IMR-90 (cell line): ENCODE measurements at regions of chr16 and their contacts with region 1.

Region 1: GRCh38 chr16:30957456-30958174 is at the start of gene SETD1A:
- DNase-seq: peak; percentile 95
- ATAC-seq: peak; percentile 85
- H3K4me3 ChIP-seq: peak within 1 kb of the TSS; percentile 61
- H3K27ac ChIP-seq: peak within 1 kb of the TSS; percentile 95
- H3K4me1 ChIP-seq: peaks cover 6% of the 10 kb centered on the region
- H3K27me3 ChIP-seq: no peaks in the 10 kb centered on the region
- CTCF ChIP-seq: no peak
- POLR2A ChIP-seq: no peak; the same call in 1 of the 2 replicates
- RAD21 ChIP-seq: no peak
- total RNA-seq, gene SETD1A: 0.54 and 0.56 TPM in 2 replicates

Region 2: DNA sequence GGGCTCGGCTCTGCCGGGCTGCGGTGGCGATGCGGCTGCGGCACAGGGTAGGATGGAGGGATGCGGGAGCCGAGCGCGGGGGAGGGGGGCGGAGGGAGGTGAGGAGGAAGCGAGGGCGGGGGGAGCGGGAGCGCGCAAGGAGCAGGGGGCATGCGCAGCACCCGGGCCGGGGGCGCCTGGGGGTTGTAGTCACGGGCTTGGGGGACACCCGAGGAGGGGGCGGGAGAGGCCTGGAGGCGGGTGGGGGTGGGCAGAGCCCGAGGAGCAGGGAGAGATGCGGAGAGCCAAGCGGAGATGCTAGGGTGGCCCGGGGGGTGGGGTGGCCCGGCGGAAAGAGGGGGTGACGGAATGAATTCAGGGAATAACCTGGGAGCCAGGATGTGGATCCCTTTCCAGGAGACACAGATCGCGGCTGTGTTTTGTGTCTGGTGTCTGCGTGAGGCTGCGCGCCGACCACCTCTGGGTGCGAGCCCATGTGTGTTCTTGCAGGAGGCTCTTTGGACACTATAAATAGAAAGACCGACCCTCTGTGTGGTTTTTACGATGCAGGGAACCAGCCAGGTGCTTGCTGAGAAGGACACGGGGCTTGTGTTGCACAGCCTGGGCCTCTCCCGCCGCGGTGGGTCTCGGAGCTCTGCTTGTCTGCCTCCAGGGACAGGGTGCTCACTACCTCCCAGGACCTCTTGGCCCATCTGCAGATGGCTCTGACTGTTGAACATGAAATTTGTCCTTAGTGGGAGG is 53.1 kb after region 1 on chr16 and contains the start of gene STX1B:
- CTCF ChIA-PET with region 1: no interaction called
- POLR2A ChIA-PET with region 1: no interaction called
- dilution Hi-C with region 1: no loop called
- in situ Hi-C with region 1: no loop called
- intact Hi-C with region 1: no loop called
- DNase-seq: no peak
- ATAC-seq: peak; percentile 75
- H3K4me3 ChIP-seq: peak within 1 kb of the TSS; percentile 62
- H3K27ac ChIP-seq: peak within 1 kb of the TSS; percentile 11; the same call in 1 of the 2 replicates
- H3K4me1 ChIP-seq: peaks cover 31% of the 10 kb centered on the region
- H3K27me3 ChIP-seq: peaks cover 9% of the 10 kb centered on the region
- CTCF ChIP-seq: no peak
- POLR2A ChIP-seq: no peak
- RAD21 ChIP-seq: no peak
- total RNA-seq, gene STX1B: 3.9 TPM in 2 replicates

Region 3: DNA sequence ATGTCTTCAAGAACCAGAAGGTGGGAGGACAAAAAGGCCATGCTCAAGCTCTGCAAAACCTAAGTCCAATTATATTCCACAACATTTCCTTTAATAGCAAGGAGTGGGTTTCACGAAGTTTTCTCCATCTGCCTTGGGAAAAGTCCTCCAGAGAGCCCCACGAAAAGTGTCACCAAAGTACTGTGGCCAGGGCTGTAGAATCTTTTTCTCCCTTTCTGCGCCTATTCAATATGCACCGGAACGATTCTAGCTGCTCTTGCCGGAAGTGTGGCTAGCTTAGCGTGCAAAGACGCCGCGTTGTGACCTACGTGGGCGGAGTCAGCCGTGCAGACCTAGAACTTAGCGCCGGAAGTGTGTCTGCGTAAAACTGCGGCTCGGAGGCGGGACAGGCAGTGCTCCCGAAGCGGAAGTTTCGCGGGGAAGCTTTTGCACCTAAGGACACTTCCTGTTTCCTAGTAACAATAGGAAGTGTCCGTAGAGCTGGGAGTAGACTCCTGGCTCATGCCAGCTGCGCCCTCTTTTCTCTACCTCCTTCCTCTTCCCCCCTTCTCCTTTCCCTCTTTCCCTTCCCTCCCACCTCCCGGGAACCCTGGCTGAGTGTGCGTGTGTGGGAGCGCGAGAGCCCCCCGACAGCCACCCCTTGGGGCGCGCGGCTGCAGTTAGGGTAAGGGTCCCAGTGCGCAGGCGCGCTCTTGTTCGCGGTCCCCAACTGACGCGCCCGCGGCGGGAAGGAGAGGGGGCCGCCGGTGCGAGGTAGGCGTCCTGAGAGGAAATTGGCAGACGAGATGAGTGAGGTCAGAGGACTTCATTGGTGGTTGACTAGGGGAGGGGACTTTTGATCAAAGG is 116.6 kb after region 1 on chr16 and contains the starts of genes ZNF646 and ZNF668:
- CTCF ChIA-PET with region 1: no interaction called
- POLR2A ChIA-PET with region 1: no interaction called
- dilution Hi-C with region 1: no loop called
- in situ Hi-C with region 1: no loop called
- intact Hi-C with region 1: loop called (anchors 10 kb)
- DNase-seq: peak; percentile 100
- ATAC-seq: peak; percentile 76
- H3K4me3 ChIP-seq: peak within 1 kb of the TSS; percentile 81
- H3K27ac ChIP-seq: peak within 1 kb of the TSS; percentile 90
- H3K4me1 ChIP-seq: peaks cover 6% of the 10 kb centered on the region
- H3K27me3 ChIP-seq: no peaks in the 10 kb centered on the region
- CTCF ChIP-seq: no peak
- POLR2A ChIP-seq: peak; percentile 72
- RAD21 ChIP-seq: no peak; the same call in 1 of the 2 replicates
- total RNA-seq, gene ZNF646: 6.8 and 6.9 TPM in 2 replicates
- total RNA-seq, gene ZNF668: 4.5 and 5.3 TPM in 2 replicates

Region 4: GRCh38 chr16:31168848-31169247 is 211.2 kb after region 1 on chr16:
- CTCF ChIA-PET with region 1: no interaction called
- POLR2A ChIA-PET with region 1: no interaction called
- dilution Hi-C with region 1: no loop called
- in situ Hi-C with region 1: no loop called
- intact Hi-C with region 1: no loop called
- DNase-seq: no peak
- ATAC-seq: no peak
- H3K4me3 ChIP-seq: no peak overlapping the region
- H3K27ac ChIP-seq: no peak overlapping the region
- H3K4me1 ChIP-seq: no peaks in the 10 kb centered on the region
- H3K27me3 ChIP-seq: no peaks in the 10 kb centered on the region
- CTCF ChIP-seq: no peak
- POLR2A ChIP-seq: no peak
- RAD21 ChIP-seq: no peak

Region 5: DNA sequence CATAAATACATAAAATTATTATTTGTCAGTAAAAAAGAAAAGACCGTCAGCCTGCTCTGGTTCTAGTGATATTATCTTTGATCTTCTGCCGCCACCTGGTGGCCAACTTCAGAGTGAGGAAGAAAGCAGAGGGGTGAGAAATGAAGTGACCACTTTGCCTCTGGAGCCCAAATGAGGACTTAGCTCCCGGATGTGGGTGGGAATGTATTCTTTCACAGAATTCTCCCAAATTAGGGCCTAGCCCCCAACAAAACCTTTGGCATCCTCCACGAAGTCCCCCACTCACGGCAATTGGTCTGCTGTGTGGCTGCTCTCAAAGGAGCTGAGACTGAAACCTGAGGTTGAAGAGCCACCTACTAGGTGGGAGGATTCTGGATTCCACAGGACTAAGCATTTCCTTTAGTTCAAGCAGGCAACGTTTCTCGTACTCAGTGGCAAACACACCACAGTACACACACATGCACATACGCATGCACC is 911.1 kb after region 1 on chr16:
- CTCF ChIA-PET with region 1: no interaction called
- POLR2A ChIA-PET with region 1: no interaction called
- dilution Hi-C with region 1: no loop called
- in situ Hi-C with region 1: no loop called
- intact Hi-C with region 1: loop called (anchors 10 kb)
- DNase-seq: peak; percentile 72
- ATAC-seq: peak; percentile 79
- H3K4me3 ChIP-seq: no peak overlapping the region
- H3K27ac ChIP-seq: no peak overlapping the region
- H3K4me1 ChIP-seq: peaks cover 6% of the 10 kb centered on the region
- H3K27me3 ChIP-seq: peaks cover 12% of the 10 kb centered on the region
- CTCF ChIP-seq: peak; percentile 76
- POLR2A ChIP-seq: no peak
- RAD21 ChIP-seq: peak; percentile 74